Right cardiac atrium (tissue), 5 donors: ENCODE measurements at regions of chr17 and their contacts with region 1.

Region 1: GRCh38 chr17:81159611-81160265 is 5.6 kb upstream of the PVALEF start:
- DNase-seq: peak in 1 of 3 donors; percentile 49
- ATAC-seq: peak in 1 of 2 donors; percentile 19
- H3K4me3 ChIP-seq: peak overlapping the region; percentile 9
- H3K27ac ChIP-seq: no peak overlapping the region
- H3K4me1 ChIP-seq: no peaks in the 10 kb centered on the region
- H3K27me3 ChIP-seq: no peaks in the 10 kb centered on the region

Region 2: DNA sequence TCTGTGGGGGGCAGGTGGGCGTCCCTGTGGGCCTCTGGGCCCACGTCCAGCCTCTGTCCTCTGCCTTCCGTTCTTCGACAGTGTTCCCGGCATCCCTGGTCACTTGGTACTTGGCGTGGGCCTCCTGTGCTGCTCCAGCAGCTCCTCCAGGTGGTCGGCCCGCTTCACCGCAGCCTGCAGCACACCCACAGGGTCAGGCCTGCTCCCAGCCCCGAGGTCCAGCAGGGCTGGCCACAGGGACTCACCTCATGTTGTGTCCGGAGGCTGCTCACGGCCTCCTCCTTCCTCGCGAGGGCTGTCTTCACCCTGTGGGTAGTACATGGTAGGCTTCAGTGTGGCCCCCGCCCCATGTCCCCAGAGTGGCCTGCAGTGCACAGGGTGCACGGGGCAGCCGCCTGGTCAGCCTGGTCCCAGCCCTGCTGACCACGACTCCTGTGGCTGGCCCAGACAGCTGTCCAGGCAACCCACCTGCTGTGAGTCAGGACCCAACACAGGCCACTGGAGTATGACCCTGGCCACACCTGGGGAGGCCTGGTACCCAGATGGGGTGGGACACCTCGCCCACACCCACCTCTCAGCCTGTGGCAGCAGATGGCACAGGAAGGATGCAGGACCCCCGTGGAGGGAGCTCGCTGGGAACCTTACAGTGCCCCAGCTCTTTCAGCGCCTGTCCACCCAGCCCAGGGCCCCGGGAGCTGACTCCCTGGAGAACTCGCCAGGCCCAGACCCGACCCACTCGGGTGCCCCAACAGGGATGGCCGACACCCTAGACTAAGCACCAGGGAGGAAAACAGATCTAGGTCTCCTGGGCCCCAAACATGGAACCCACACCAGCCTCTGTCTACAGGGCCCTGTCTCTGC is 30.2 kb after region 1 on chr17:
- intact Hi-C with region 1: loop called in 1 of 4 experiments (anchors 5 kb)
- DNase-seq: peak in 2 of 3 donors; percentile 43 to 56
- ATAC-seq: no peak
- H3K4me3 ChIP-seq: no peak overlapping the region
- H3K27ac ChIP-seq: no peak overlapping the region
- H3K4me1 ChIP-seq: no peaks in the 10 kb centered on the region
- H3K27me3 ChIP-seq: no peaks in the 10 kb centered on the region